BJ (cell line): ENCODE measurements at regions of chr6 and their contacts with region 1.

Region 1: GRCh38 chr6:110039364-110039980 is 61.4 kb downstream of the GPR6 start:
- DNase-seq: peak; percentile 46
- H3K4me3 ChIP-seq: peak overlapping the region; percentile 36
- H3K27me3 ChIP-seq: 0 out of 2 replicates have a peak, but pooled peaks cover 2% of the 10 kb centered on the region
- CTCF ChIP-seq: peak; percentile 93

Region 2: DNA sequence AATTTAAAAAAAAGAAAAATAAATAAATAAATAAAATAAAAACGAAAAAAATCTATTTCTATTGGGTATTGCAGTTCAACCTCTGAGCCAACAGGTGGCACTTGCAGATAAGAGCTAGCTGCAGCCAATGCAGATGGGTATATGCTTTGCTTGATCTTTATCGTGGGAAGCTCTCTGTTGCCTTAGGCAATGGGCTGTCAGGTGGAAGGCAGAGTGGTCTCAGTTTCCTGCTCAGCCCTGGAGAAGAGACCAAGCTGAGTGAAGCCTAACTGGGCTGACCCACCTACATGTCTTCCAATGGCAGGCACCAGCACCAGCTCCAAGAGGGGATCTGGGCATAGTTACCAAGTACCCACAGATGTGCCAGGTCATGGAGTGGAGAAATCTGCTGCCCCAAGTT is 443.5 kb before region 1 on chr6:
- CTCF ChIA-PET with region 1: interaction called, 13 read pairs
- POLR2A ChIA-PET with region 1: no interaction called
- DNase-seq: no peak
- H3K4me3 ChIP-seq: no peak overlapping the region
- H3K27me3 ChIP-seq: no peaks in the 10 kb centered on the region
- CTCF ChIP-seq: peak; percentile 60

Region 3: DNA sequence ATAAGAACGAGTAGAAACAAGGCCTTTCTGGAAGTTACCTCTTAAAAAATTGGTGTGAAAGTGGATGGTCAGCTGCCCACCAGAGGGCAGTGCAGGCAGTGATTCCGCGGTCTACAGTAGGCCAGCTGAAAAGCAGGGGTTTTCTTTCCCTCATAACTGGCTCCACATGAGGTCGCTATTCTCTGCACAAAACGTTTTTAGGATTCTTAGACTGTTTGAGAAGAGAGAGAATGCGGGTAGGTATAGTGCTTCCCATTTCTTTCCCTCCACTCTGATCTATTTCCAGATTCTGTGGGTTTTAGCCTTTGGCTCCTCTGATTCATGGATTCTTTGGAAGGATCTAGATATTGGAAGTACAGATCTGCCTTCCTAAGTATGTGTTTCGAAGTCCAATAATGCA is 334.2 kb before region 1 on chr6:
- CTCF ChIA-PET with region 1: interaction called, 314 read pairs
- POLR2A ChIA-PET with region 1: interaction called, 6 read pairs
- DNase-seq: peak; percentile 53
- H3K4me3 ChIP-seq: no peak overlapping the region
- H3K27me3 ChIP-seq: no peaks in the 10 kb centered on the region
- CTCF ChIP-seq: peak; percentile 95

Region 4: GRCh38 chr6:110029144-110029543 is 10.3 kb before region 1 on chr6:
- CTCF ChIA-PET with region 1: interaction called, 12 read pairs
- POLR2A ChIA-PET with region 1: no interaction called
- DNase-seq: no peak
- H3K4me3 ChIP-seq: no peak overlapping the region
- H3K27me3 ChIP-seq: no peaks in the 10 kb centered on the region
- CTCF ChIP-seq: no peak

Region 5: GRCh38 chr6:110063594-110064263 is 24.3 kb after region 1 on chr6:
- CTCF ChIA-PET with region 1: interaction called, 14 read pairs
- POLR2A ChIA-PET with region 1: no interaction called
- DNase-seq: no peak
- H3K4me3 ChIP-seq: no peak overlapping the region
- H3K27me3 ChIP-seq: peaks cover 10% of the 10 kb centered on the region
- CTCF ChIP-seq: no peak

Region 6: GRCh38 chr6:110298916-110299315 is 259.4 kb after region 1 on chr6:
- CTCF ChIA-PET with region 1: no interaction called
- POLR2A ChIA-PET with region 1: no interaction called
- DNase-seq: no peak
- H3K4me3 ChIP-seq: no peak overlapping the region
- H3K27me3 ChIP-seq: no peaks in the 10 kb centered on the region
- CTCF ChIP-seq: no peak